AG04449 (cell line): ENCODE measurements at regions of chr1 and their contacts with region 1.

Region 1: GRCh38 chr1:197868751-197869489 is 33.5 kb upstream of the C1orf53 start:
- DNase-seq: no peak
- H3K4me3 ChIP-seq: no peak overlapping the region
- CTCF ChIP-seq: peak; percentile 55

Region 2: DNA sequence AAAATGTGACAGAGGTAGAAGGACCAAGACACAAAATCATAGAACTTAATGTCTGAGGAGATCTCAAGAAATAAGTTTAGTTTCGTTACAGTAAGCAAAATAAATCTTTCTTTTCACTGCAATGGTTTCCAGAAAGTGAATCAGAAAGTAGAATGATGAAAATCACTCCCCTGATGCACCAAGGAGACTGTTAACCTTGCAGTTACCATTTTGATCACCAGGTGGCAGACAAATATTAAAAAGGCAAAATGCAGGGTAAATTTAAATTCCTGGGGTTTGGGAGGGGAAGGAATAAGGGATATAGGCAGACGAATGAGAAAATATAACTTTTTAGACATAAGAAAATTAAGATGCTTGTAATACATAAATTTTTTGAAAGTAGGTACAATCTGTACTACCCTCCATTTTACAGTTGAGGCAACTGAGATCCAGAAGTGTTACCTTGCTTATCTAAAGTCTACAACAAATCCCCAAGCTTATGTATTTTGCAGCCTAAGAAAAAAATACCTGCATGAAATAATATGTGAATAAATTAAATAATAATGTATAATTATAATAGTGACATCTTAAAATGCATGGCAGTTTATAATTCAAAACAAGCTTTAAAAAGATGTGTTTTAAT is 347.7 kb before region 1 on chr1:
- CTCF ChIA-PET with region 1: interaction called, 14 read pairs
- POLR2A ChIA-PET with region 1: no interaction called
- DNase-seq: no peak
- H3K4me3 ChIP-seq: no peak overlapping the region
- CTCF ChIP-seq: peak; percentile 62

Region 3: GRCh38 chr1:197614916-197615692 is 253.8 kb before region 1 on chr1:
- CTCF ChIA-PET with region 1: interaction called, 156 read pairs
- POLR2A ChIA-PET with region 1: no interaction called
- DNase-seq: no peak
- H3K4me3 ChIP-seq: no peak overlapping the region
- CTCF ChIP-seq: peak; percentile 65

Region 4: DNA sequence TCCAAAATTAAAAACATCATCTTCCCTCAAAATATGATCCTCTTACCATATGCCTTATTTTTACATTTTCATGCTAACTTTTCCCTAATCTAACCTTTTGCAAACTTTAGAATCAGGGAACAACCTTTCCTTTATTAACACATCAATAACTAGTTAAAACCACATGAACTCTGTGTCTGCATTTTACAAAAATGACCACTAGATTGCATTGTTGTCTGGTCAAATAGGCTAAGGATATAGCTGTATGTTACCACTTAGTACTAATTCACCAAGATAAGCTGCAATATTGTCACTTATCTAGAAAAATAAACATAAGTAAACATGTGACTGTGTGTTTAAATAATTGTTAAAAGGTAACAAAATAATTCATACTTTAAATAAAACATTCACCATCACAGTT is 176.0 kb before region 1 on chr1:
- CTCF ChIA-PET with region 1: interaction called, 29 read pairs
- POLR2A ChIA-PET with region 1: no interaction called
- DNase-seq: no peak
- H3K4me3 ChIP-seq: no peak overlapping the region
- CTCF ChIP-seq: peak; percentile 23

Region 5: DNA sequence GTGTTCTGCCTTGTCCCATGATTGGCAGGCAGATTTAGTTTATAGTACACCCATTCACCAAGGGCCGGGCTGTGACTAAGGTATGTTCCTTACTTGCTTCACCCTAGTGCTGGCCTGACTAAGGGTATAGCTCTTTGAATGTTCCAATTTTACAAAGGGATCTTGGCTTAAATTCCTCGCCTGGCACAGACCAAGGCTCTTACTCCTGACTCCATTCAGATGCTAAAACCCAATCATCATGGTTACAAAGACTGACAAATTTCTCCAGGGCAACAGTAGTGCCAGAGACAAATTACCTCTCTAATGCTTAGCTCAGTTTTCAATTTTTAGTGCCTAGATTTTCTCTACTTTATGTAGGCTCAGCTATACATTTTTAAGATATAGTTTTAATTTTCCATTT is 22.0 kb after region 1 on chr1:
- CTCF ChIA-PET with region 1: interaction called, 19 read pairs
- POLR2A ChIA-PET with region 1: no interaction called
- DNase-seq: no peak
- H3K4me3 ChIP-seq: no peak overlapping the region
- CTCF ChIP-seq: no peak

Region 6: DNA sequence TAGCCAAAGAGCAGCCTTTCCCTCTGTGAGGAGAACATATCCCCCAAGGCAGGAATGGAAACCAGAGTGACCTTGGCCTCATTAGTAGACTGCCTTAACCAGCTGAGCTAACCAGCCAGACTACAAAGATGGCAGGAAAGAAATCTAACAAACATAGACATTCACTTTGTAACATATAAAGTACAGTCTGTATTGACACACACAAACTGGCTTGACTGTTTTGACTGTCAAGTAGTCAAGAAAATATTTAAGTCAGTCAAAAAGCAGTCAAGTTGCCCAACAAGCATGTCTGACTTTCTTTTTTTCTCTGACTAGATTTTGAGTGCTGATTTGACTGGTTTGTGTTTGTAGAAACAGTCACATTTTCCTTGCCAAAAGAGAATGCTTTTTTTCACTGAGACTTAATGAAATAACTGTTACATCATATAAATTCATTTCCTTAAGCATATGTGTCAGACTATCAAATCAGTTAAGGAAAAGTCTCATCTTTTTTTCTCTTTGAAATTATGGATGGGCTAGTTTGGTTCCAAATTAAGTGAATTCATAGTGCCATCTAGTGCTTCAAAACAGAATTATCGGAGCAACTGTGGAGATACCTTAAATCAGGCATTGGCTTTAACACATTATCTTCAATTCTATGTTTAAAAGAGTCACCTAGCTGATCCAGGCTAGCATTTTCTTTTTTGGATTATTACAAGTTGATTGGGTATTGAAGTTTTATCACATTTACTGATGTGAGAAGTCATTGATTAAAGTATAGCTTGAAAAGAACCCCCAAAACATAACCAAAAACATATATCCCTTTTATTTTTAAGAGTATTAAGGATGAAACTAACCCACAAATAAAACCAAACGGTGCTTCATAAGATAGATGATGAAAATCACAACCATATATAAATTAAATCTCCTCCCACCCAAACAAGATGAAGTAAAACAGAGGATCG is 596.6 kb after region 1 on chr1:
- CTCF ChIA-PET with region 1: interaction called, 10 read pairs
- POLR2A ChIA-PET with region 1: no interaction called
- DNase-seq: peak; percentile 49
- H3K4me3 ChIP-seq: no peak overlapping the region
- CTCF ChIP-seq: peak; percentile 30